Activated CD4-positive, alpha-beta memory T cell treated with anti-CD3 and anti-CD28 coated beads, Interleukin-2, amount 10 ng/mL, durations not matched to agents 7 days and 5 days (primary cell): ENCODE measurements at regions of chr15 and their contacts with region 1.

Region 1: GRCh38 chr15:64247906-64248541 is 85.2 kb upstream of the PPIB start:
- DNase-seq: peak; percentile 43
- H3K4me3 Mint-ChIP-seq: no peak overlapping the region
- H3K27ac Mint-ChIP-seq: no peak overlapping the region
- H3K4me1 Mint-ChIP-seq: peaks cover 54% of the 10 kb centered on the region
- H3K27me3 Mint-ChIP-seq: no peaks in the 10 kb centered on the region

Region 2: DNA sequence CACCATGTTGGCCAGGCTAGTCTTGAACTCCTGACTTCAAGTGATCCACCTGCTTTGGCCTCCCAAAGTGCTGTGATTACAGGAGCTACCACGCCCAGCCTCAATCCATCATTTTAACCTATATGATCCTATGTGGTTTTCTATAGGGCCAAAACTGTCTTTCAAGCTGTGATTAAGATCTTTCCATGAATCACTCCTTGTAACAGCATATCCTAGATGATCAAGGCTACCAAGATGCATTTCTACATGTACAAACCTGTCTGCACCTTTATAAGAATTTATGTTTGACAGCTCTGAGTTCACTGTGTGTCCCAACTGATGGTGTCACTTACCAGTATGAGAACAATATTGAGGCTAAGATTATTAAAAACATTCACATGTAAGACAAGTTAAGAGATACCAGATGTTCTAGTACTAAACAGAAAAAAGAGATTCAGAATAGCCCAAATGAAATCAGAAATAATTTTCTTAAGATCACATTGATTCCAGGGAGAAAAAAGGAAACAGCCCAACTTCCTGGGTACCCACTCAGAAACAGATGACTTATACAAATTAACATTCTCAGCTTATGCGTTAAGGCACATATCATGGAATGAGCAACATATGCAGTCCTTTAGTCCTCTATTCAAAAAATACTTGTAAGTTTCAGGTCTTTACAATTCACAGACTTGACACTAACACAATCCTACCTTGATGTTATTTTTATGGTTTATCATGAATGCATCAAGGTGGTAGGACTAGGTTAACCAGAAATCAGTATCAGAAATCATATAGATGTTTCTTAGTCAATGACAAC is 60.4 kb before region 1 on chr15:
- CTCF ChIA-PET with region 1: no interaction called
- POLR2A ChIA-PET with region 1: interaction called, 12 read pairs
- DNase-seq: no peak
- H3K4me3 Mint-ChIP-seq: peak overlapping the region; percentile 72
- H3K27ac Mint-ChIP-seq: peak overlapping the region; percentile 87
- H3K4me1 Mint-ChIP-seq: peaks cover 25% of the 10 kb centered on the region
- H3K27me3 Mint-ChIP-seq: no peaks in the 10 kb centered on the region